ENCODE measurements at regions of chr1 and their contacts with region 1.

Region 1: GRCh38 chr1:207404849-207405525 is 49.1 kb upstream of the CR2 start:
- DNase-seq: peak; percentile 69
- H3K4me3 Mint-ChIP-seq: no peak overlapping the region
- H3K27ac Mint-ChIP-seq: no peak overlapping the region
- H3K4me1 Mint-ChIP-seq: peaks cover 18% of the 10 kb centered on the region
- H3K27me3 Mint-ChIP-seq: no peaks in the 10 kb centered on the region

Region 2: GRCh38 chr1:206925106-206925736 is 479.8 kb before region 1 on chr1:
- intact Hi-C with region 1: loop called (anchors 10 kb)
- DNase-seq: peak; percentile 85
- H3K4me3 Mint-ChIP-seq: no peak overlapping the region
- H3K27ac Mint-ChIP-seq: no peak overlapping the region
- H3K4me1 Mint-ChIP-seq: peaks cover 24% of the 10 kb centered on the region
- H3K27me3 Mint-ChIP-seq: no peaks in the 10 kb centered on the region

Region 3: DNA sequence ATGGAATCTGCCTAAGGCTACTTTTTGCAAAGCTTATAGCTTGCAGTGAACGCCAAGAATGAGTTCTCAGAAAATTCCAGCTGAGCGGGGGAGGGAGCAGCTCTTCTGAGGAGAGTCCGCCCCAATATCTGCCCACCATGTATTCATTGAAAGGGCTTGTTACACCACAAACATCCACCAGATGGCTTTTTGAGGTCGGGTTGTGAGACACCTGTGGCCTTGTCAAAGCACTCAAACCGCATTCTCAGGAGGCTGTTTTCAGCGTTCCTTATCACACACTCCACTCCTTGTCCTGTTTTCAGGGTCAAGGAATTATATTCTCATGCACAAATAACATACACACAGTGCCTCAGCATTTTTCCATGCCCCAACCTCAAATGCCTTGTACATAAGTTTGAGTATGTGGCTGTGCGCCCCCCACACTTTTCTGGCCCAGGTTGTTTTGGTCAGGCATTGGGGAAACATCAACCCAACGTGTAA is 320.2 kb before region 1 on chr1:
- intact Hi-C with region 1: loop called (anchors 1 kb)
- DNase-seq: peak; percentile 89
- H3K4me3 Mint-ChIP-seq: no peak overlapping the region
- H3K27ac Mint-ChIP-seq: no peak overlapping the region
- H3K4me1 Mint-ChIP-seq: peaks cover 30% of the 10 kb centered on the region
- H3K27me3 Mint-ChIP-seq: peaks cover 24% of the 10 kb centered on the region

Region 4: DNA sequence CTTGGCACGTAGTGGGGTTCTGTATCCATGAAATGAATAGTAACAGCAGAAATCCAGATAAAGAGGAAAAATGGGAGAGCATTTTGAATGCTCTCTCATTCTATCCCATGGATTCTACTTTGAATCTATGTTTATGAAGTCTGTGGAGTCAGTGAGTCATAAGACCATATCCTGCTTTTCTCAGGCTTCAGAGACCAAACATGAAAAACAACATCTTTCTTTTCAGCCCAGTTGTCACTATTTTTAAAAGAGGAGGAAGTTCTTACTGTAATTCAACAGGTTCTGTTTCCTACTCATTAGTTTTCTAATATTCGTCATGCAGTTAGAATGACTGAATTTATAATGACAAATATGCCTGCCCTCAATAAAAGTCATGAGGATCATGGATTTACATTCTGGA is 122.9 kb before region 1 on chr1:
- intact Hi-C with region 1: loop called (anchors 2 kb)
- DNase-seq: no peak
- H3K4me3 Mint-ChIP-seq: peak overlapping the region; percentile 55
- H3K27ac Mint-ChIP-seq: peak overlapping the region; percentile 84
- H3K4me1 Mint-ChIP-seq: peaks cover 48% of the 10 kb centered on the region
- H3K27me3 Mint-ChIP-seq: peaks cover 1% of the 10 kb centered on the region

Region 5: GRCh38 chr1:207389740-207390464 is 15.1 kb before region 1 on chr1:
- intact Hi-C with region 1: loop called (anchors 2 kb)
- DNase-seq: no peak
- H3K4me3 Mint-ChIP-seq: no peak overlapping the region
- H3K27ac Mint-ChIP-seq: peak overlapping the region; percentile 82
- H3K4me1 Mint-ChIP-seq: peaks cover 8% of the 10 kb centered on the region
- H3K27me3 Mint-ChIP-seq: no peaks in the 10 kb centered on the region